MCF 10A (cell line): ENCODE measurements at regions of chr10 and their contacts with region 1.

Region 1: DNA sequence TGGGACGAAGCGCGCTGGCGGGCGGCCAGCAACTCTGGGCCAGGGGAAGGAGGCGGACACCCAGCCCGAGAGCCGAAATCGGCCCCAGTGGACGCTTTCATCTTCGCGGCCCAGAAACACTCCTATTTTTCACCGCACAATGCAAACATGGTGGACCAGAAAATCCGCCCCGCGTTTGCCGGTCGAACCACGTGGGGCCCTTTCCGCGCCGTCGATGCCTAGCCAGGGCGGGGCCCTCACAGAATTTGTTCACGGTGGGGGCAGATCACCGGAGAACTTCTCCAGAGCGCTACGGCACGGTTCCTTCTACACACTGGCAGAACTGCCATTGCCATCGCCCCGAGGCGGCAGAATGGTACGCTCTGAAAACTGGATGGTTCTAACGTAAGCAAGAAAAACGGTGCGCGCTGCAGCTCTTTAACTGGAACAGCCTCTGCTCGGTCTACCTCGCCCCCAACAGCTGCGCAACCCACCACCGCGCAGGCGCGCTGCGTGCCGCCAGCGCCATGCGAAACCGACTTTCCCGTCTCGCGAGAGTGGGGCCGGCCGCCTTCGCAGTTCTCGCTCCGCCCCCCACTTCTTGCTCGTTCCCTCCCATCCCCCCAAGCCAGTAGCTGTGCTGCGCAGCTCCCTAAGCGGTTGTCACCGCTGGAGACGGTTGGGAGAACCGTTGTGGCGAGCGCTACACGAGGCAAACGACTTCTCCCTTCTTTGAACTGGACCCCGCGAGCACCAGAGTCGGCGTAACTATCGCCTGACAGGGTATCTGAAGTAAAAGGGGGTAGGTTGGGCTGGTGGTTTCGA is at the start of gene HNRNPH3:
- DNase-seq: peak; percentile 97
- H3K4me3 Mint-ChIP-seq: peak within 1 kb of the TSS; percentile 97
- H3K27ac Mint-ChIP-seq: peak within 1 kb of the TSS; percentile 99
- H3K4me1 Mint-ChIP-seq: peaks cover 29% of the 10 kb centered on the region
- H3K27me3 Mint-ChIP-seq: no peaks in the 10 kb centered on the region
- CTCF ChIP-seq: no peak
- total RNA-seq, gene HNRNPH3: 216 and 285 TPM in 2 replicates

Region 2: GRCh38 chr10:68342909-68343516 is 11.4 kb after region 1 on chr10:
- CTCF ChIA-PET with region 1: interaction called, 16 read pairs
- POLR2A ChIA-PET with region 1: interaction called, 19 read pairs
- intact Hi-C with region 1: no loop called
- DNase-seq: no peak
- H3K4me3 Mint-ChIP-seq: no peak overlapping the region
- H3K27ac Mint-ChIP-seq: no peak overlapping the region
- H3K4me1 Mint-ChIP-seq: peaks cover 12% of the 10 kb centered on the region
- H3K27me3 Mint-ChIP-seq: no peaks in the 10 kb centered on the region
- CTCF ChIP-seq: no peak

Region 3: DNA sequence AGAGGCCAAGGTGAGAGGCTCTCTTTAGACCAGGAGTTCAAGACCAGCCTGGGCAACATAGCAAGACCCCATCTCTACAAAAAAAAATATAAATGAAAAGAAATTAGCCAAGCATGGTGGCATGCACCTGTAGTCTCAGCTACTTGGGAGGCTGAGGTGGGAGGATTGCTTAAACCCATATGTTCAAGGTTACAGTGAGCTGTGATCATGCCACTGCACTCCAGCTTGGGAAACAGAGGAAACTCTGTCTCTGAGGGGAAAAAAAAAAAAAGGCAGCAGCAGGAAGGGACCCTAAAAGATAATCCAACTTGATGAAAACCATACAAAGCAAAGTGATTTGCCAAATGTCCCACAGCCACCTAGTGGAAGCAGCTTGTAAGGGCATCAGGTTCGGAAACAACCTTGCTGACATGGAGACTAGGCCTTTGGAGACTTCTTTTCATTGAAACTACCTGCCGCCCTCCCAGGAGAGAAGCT is 16.6 kb after region 1 on chr10:
- CTCF ChIA-PET with region 1: interaction called, 16 read pairs
- POLR2A ChIA-PET with region 1: interaction called, 19 read pairs
- intact Hi-C with region 1: no loop called
- DNase-seq: peak; percentile 60
- H3K4me3 Mint-ChIP-seq: no peak overlapping the region
- H3K27ac Mint-ChIP-seq: no peak overlapping the region
- H3K4me1 Mint-ChIP-seq: no peaks in the 10 kb centered on the region
- H3K27me3 Mint-ChIP-seq: no peaks in the 10 kb centered on the region
- CTCF ChIP-seq: peak; percentile 58

Region 4: GRCh38 chr10:68385740-68386139 is 54.1 kb after region 1 on chr10:
- CTCF ChIA-PET with region 1: no interaction called
- POLR2A ChIA-PET with region 1: no interaction called
- intact Hi-C with region 1: no loop called
- DNase-seq: no peak
- H3K4me3 Mint-ChIP-seq: no peak overlapping the region
- H3K27ac Mint-ChIP-seq: no peak overlapping the region
- H3K4me1 Mint-ChIP-seq: no peaks in the 10 kb centered on the region
- H3K27me3 Mint-ChIP-seq: no peaks in the 10 kb centered on the region
- CTCF ChIP-seq: no peak